Activated CD8-positive, alpha-beta T cell treated with anti-CD3 and anti-CD28 coated beads, Interleukin-2, amount 10 ng/mL, durations not matched to agents 7 days and 5 days (primary cell): ENCODE measurements at regions of chr15 and their contacts with region 1.

Region 1: DNA sequence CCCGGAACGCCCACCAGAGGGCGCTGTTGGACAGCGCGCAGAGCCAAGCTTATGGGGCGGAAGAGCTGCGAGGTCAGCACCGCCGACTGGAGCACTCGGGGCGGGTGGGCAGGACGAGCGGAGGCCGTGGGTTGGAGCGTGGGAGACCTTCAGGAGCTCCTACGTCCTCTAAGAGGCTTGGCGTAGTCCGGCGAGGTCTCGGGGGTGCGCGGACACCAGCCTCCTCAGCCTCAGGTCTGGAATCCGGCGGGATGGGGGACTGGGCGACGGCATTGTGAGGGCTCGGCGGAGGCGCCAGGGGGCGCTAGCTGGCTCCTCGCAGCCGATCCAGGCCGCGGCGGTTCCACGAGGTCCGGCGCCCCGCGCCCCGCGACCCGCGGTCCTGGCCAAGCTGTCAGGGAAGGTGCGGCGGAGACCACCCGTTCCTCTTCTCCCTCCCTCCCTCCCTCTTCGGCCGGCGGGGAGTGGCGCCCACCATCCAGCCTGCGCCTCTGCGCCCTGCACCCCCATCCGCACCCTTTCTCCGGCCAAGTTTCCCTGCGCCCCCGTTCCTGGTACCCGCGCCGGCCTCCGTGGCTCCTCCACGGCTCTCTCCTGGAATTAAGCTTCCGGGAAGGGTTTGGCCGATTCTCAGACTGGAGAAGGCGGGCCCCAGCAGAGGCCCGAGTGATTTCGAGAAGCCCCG is 24.3 kb upstream of the POLG start:
- DNase-seq: peak; percentile 87
- ATAC-seq: peak; percentile 94
- H3K4me3 Mint-ChIP-seq: peak overlapping the region; percentile 80
- H3K27ac Mint-ChIP-seq: no peak overlapping the region
- H3K4me1 Mint-ChIP-seq: peaks cover 12% of the 10 kb centered on the region
- H3K27me3 Mint-ChIP-seq: peaks cover 70% of the 10 kb centered on the region

Region 2: GRCh38 chr15:89197503-89197971 is 161.4 kb before region 1 on chr15:
- CTCF ChIA-PET with region 1: no interaction called
- POLR2A ChIA-PET with region 1: no interaction called
- DNase-seq: no peak
- ATAC-seq: no peak
- H3K4me3 Mint-ChIP-seq: no peak overlapping the region
- H3K27ac Mint-ChIP-seq: no peak overlapping the region
- H3K4me1 Mint-ChIP-seq: peaks cover 12% of the 10 kb centered on the region
- H3K27me3 Mint-ChIP-seq: no peaks in the 10 kb centered on the region

Region 3: GRCh38 chr15:89321521-89322410 is 37.1 kb before region 1 on chr15:
- CTCF ChIA-PET with region 1: no interaction called
- POLR2A ChIA-PET with region 1: no interaction called
- DNase-seq: peak; percentile 19
- ATAC-seq: peak; percentile 12
- H3K4me3 Mint-ChIP-seq: no peak overlapping the region
- H3K27ac Mint-ChIP-seq: peak overlapping the region; percentile 40
- H3K4me1 Mint-ChIP-seq: peaks cover 4% of the 10 kb centered on the region
- H3K27me3 Mint-ChIP-seq: no peaks in the 10 kb centered on the region

Region 4: GRCh38 chr15:89334510-89335288 is 24.2 kb before region 1 on chr15 and contains the start of gene POLG:
- CTCF ChIA-PET with region 1: interaction called, 58 read pairs
- POLR2A ChIA-PET with region 1: interaction called, 3 read pairs
- DNase-seq: peak; percentile 99
- ATAC-seq: peak; percentile 94
- H3K4me3 Mint-ChIP-seq: peak within 1 kb of the TSS; percentile 86
- H3K27ac Mint-ChIP-seq: peak within 1 kb of the TSS; percentile 90
- H3K4me1 Mint-ChIP-seq: peaks cover 50% of the 10 kb centered on the region
- H3K27me3 Mint-ChIP-seq: peaks cover 11% of the 10 kb centered on the region
- total RNA-seq, gene POLG: 121 to 128 TPM

Region 5: DNA sequence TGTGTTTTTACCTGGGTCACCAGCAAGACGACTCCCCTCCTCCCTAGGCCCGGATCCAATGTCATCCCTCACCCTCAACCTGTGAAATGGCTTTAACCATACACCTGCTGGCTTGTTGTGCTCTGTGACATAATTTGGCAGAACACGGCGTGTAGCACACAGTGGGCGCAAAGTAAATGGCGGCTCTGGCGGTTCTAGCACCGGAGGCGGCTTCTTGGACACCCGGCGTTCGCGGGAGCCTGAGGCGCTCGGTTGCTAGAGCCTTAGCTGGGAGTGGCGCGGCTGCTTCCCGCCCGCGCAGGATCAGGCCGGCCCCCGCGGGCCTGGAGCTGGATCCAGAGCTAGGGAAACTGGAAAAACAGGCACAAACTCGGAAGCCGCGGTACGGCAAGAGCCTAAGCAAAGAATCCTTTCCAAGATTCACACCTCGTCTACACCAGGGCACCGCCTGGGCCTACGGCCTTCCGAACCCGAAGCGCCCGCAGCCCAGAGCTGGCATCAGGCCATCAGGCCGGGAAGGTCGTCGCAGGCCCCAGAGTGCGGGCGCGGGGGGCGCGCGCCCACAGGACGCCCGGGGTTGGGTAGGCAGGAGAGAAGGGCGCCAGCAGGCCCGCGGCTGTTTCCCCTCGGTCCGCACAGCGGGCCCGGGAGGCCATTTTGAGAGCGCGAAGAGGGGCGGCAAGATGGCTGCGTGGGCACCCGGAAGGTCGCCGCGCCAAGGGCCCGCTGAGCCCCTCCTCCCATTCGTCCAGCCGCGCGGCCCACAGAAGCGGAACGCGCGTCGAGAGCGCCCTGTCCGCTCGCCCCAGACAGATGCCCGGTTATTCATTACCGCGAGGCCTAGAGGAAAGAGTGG is 19.6 kb after region 1 on chr15:
- CTCF ChIA-PET with region 1: interaction called, 35 read pairs
- POLR2A ChIA-PET with region 1: interaction called, 3 read pairs
- DNase-seq: no peak
- ATAC-seq: peak; percentile 45
- H3K4me3 Mint-ChIP-seq: peak overlapping the region; percentile 56
- H3K27ac Mint-ChIP-seq: no peak overlapping the region
- H3K4me1 Mint-ChIP-seq: peaks cover 6% of the 10 kb centered on the region
- H3K27me3 Mint-ChIP-seq: peaks cover 81% of the 10 kb centered on the region

Region 6: GRCh38 chr15:89399238-89400120 is 40.6 kb after region 1 on chr15:
- CTCF ChIA-PET with region 1: interaction called, 126 read pairs
- POLR2A ChIA-PET with region 1: no interaction called
- DNase-seq: peak; percentile 53
- ATAC-seq: peak; percentile 61
- H3K4me3 Mint-ChIP-seq: peak overlapping the region; percentile 69
- H3K27ac Mint-ChIP-seq: peak overlapping the region; percentile 52
- H3K4me1 Mint-ChIP-seq: peaks cover 19% of the 10 kb centered on the region
- H3K27me3 Mint-ChIP-seq: peaks cover 61% of the 10 kb centered on the region

Region 7: DNA sequence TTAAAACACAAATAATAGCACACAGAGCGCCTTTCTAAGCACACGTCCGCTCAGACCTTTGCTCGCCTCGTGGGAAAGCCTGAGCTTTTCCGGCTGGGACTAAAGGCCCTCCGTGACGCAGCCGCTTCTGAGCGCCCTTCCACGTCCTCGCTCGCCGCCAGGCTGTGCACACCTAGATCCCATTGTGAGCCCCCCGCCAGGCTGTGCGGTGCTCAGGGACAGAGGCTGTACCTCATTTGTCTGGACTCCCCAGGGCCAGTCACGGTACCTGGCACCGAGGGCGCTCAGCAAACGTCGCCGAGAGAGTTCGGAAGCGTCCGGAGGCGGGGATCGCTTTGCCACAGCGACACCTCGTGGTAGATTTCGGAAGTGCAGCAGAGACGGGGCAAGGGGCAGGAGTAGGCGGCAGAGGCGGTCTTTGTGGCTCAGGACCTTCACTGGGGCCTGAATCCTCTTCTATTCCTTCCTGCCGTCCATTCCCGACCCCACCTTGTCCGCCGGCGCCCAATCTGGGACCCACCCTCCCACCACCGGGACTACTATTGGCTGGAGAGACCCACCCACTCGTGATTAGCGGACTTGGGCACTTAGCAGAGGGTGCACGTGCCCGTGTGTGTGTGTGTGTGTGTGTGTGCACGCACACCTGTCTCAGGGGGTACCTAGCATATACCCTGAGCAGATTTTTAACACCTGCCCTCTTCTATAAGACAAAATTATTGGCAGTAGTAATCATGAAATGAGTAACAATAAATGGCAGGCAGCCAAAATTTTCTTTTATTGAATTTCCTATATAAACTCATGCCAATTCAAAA is 71.8 kb after region 1 on chr15:
- CTCF ChIA-PET with region 1: interaction called, 128 read pairs
- POLR2A ChIA-PET with region 1: no interaction called
- DNase-seq: peak; percentile 90
- ATAC-seq: peak; percentile 96
- H3K4me3 Mint-ChIP-seq: peak overlapping the region; percentile 69
- H3K27ac Mint-ChIP-seq: no peak overlapping the region
- H3K4me1 Mint-ChIP-seq: peaks cover 5% of the 10 kb centered on the region
- H3K27me3 Mint-ChIP-seq: peaks cover 21% of the 10 kb centered on the region

Region 8: DNA sequence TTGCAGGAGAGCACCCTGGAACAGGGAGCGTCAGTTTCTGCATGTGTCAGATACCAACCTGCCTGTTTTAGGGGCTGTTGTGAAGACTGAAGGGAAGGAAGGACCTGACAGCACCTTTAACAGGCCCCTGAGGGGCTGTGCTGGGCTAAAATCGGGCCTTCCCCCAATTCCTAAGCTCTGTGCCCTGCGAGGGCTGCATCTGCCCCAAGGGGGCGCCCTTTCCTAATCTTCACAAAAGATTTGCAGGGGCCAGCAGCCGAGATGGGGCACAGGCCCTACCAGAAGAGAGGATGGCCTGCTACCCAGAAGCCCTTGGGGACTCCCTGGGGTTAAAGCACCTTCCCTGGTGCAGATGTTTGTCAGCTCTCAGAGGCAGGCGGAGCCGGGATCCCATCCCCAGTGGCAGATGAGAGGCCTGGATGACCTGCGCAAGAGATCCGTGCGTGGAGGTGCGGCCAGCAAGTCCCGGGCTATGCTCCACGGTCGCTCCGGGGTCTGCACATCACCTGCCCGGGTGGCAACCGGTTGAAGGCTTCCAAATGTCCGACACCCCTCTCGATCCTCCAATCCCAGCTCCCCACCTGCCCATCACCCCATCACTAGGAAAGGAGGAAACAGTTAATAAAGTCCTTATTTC is 83.9 kb after region 1 on chr15:
- CTCF ChIA-PET with region 1: interaction called, 15 read pairs
- POLR2A ChIA-PET with region 1: no interaction called
- DNase-seq: peak; percentile 70
- ATAC-seq: peak; percentile 60
- H3K4me3 Mint-ChIP-seq: no peak overlapping the region
- H3K27ac Mint-ChIP-seq: no peak overlapping the region
- H3K4me1 Mint-ChIP-seq: peaks cover 5% of the 10 kb centered on the region
- H3K27me3 Mint-ChIP-seq: peaks cover 10% of the 10 kb centered on the region